Endothelial cell of umbilical vein (primary cell): ENCODE measurements at regions of chr6 and their contacts with region 1.

Region 1: DNA sequence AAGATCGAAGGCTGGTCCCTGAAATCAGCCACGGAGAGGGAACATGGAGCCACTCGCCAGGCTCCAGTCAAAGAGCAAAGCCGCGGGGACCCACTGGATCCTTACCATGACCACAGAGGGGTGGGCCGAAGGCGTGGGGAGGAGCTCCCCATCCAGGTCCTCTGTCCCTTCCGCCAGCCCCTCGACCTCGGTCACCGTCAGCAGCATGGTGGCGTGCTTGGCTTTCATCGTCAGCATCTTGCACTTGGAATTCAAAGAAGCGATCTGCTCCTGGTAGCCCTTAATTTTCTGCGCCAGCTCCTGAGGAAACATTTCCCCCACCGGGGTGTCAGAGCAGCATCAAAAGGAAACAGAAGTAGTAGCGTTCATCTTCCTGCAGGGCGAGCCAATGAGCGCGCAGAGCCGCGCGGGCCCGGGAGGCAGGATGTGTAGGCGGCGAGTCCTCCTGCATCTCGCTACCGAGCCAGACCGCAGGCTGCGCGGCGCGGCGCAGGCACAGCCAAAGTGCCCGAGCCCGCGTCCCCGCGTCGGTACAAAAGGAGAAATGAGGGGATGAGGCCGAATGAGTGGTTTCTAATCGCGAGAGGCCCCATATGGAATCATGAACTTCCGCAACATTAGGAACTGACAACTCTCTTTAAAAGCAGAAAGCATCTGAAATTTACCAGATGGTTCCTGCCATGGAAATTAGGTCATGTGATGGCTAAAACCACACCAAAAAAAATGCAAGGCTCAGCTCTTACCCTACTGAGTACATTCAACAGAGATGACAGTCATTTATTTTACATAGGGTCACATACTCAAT is 335.2 kb downstream of the SYNE1 start:
- DNase-seq: peak; percentile 93
- H3K4me3 ChIP-seq: peak overlapping the region; percentile 76 to 97 (median 93)
- H3K27ac ChIP-seq: peak overlapping the region; percentile 84
- H3K4me1 ChIP-seq: peaks cover 22% of the 10 kb centered on the region
- H3K27me3 ChIP-seq: no peaks in the 10 kb centered on the region
- CTCF ChIP-seq: peak; percentile 57 to 70
- POLR2A ChIP-seq: peak; percentile 86

Region 2: DNA sequence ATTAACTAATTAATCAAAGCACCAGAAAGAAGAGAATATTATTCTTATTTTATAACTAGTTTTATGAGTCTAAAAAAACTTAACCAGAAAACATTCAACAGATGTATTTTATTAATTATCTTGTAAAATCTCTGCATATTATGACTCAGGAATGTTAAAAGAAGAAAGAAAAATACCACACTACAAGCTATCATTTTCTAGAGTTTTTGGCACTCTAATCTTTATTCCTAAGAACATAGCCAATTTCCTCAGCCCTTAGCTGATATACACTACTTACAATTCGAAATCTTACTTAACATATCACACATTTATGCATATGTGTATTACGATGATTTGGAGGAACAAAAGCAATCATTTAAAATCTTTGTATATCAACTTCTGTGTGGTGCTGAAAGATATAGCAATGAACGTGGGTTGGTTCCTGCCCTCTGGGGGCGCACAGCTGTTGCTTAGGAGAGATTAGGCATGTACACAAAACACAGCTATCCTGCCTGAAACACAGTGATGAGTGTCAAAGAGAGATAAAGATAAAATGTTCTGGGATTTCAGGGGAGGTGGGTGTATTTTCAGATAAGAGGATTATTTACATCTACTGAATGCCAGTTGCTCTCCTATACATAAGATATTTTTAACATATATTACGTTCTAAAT is 69.3 kb before region 1 on chr6:
- CTCF ChIA-PET with region 1: no interaction called
- POLR2A ChIA-PET with region 1: no interaction called
- dilution Hi-C with region 1: no loop called
- intact Hi-C with region 1: loop called (anchors 2 kb)
- DNase-seq: peak; percentile 89
- H3K4me3 ChIP-seq: no peak overlapping the region
- H3K27ac ChIP-seq: no peak overlapping the region
- H3K4me1 ChIP-seq: peaks cover 4% of the 10 kb centered on the region
- H3K27me3 ChIP-seq: no peaks in the 10 kb centered on the region
- CTCF ChIP-seq: peak; percentile 11 to 20
- POLR2A ChIP-seq: no peak

Region 3: DNA sequence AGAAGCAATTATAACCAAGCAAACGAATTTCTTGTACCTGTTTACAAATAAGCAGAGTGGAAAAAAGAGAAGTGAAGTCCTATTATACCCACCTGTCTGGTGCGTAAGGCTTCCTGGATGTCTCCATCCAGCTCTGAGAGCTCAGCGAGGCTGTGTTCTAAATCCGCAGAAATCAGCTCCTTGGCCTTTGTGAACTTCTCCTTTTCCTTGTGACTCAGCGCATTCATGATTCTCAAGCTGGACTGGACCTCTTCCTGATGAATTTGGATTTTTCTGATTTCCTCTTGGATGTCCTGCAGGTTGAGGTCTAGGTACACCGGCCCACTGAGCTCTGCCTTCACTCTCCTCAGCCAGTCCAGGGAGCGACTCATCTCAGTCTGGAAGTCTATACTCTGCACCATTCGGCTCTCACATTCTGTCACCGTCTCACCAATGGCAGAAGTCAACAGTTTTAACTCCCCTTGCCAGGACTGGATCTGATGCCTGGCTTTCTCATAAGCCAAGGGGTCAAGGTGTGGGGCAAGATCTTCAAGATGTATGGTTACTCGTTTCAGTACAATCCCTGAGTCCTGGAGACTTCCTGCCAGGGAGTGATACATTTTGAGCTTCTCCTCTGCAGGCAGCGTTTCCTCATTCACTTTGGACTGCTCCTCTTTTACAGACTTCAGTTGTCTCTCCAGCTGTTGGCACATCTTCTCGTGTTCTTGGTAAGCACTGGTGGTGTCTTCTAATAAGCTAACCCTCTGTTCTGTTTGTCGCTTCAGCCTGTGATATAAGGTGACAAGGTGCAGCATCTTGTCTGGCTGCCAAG is 27.9 kb after region 1 on chr6:
- CTCF ChIA-PET with region 1: interaction called, 14 read pairs
- POLR2A ChIA-PET with region 1: no interaction called
- dilution Hi-C with region 1: no loop called
- intact Hi-C with region 1: no loop called
- DNase-seq: no peak
- H3K4me3 ChIP-seq: no peak overlapping the region
- H3K27ac ChIP-seq: no peak overlapping the region
- H3K4me1 ChIP-seq: no peaks in the 10 kb centered on the region
- H3K27me3 ChIP-seq: no peaks in the 10 kb centered on the region
- CTCF ChIP-seq: no peak
- POLR2A ChIP-seq: no peak

Region 4: GRCh38 chr6:152356451-152357061 is 54.6 kb after region 1 on chr6:
- CTCF ChIA-PET with region 1: interaction called, 23 read pairs
- POLR2A ChIA-PET with region 1: no interaction called
- dilution Hi-C with region 1: no loop called
- intact Hi-C with region 1: no loop called
- DNase-seq: peak; percentile 54
- H3K4me3 ChIP-seq: no peak overlapping the region
- H3K27ac ChIP-seq: no peak overlapping the region
- H3K4me1 ChIP-seq: no peaks in the 10 kb centered on the region
- H3K27me3 ChIP-seq: no peaks in the 10 kb centered on the region
- CTCF ChIP-seq: peak in 1 of 2 donors; percentile 29
- POLR2A ChIP-seq: no peak

Region 5: GRCh38 chr6:152484806-152485205 is 182.8 kb after region 1 on chr6:
- CTCF ChIA-PET with region 1: interaction called, 3 read pairs
- POLR2A ChIA-PET with region 1: no interaction called
- dilution Hi-C with region 1: no loop called
- intact Hi-C with region 1: loop called (anchors 1 kb)
- DNase-seq: peak; percentile 92
- H3K4me3 ChIP-seq: no peak overlapping the region
- H3K27ac ChIP-seq: no peak overlapping the region
- H3K4me1 ChIP-seq: peaks cover 14% of the 10 kb centered on the region
- H3K27me3 ChIP-seq: no peaks in the 10 kb centered on the region
- CTCF ChIP-seq: no peak
- POLR2A ChIP-seq: no peak

Region 6: DNA sequence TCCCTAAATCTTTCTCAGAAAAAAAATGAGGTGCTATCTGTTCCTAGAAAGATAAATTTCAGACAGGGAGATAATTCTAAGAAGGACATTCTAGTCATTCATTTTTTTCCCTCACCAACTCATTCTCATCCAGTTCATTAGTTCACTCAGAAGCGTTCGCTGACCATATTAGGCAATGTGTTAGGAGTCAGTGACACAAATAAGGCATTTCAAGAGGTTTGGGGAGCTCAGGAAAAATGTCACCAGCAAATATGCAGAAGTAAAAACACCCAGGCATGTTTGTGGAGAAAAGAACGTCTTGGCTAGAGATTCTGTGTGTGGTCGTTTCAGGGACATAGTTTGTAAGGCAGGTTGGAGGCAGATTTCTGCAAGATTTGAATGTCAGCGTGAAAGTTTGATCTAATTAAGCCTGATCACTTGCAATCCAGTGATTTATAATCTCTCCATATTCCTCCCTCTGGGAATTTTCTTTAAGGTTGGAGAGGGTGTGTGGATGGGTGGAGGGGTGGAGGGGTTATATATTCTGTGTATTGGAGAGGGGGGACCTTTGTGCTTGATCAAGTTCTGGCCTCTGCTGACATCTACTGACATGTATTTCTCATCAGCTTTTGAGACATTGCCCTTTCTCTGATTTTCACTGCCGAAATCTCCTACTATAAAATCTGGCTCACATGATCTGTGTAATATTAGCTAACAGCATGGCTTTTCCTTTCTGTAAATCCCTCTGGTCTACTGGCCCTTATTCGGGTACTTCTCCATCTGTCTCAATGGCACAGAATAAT is 399.3 kb after region 1 on chr6:
- CTCF ChIA-PET with region 1: interaction called, 6 read pairs
- POLR2A ChIA-PET with region 1: no interaction called
- dilution Hi-C with region 1: no loop called
- intact Hi-C with region 1: loop called (anchors 5 kb)
- DNase-seq: peak; percentile 59
- H3K4me3 ChIP-seq: peak overlapping the region; percentile 57 to 97 (median 88)
- H3K27ac ChIP-seq: peak overlapping the region; percentile 92
- H3K4me1 ChIP-seq: peaks cover 42% of the 10 kb centered on the region
- H3K27me3 ChIP-seq: no peaks in the 10 kb centered on the region
- CTCF ChIP-seq: peak in 1 of 2 donors; percentile 3
- POLR2A ChIP-seq: no peak

Region 7: DNA sequence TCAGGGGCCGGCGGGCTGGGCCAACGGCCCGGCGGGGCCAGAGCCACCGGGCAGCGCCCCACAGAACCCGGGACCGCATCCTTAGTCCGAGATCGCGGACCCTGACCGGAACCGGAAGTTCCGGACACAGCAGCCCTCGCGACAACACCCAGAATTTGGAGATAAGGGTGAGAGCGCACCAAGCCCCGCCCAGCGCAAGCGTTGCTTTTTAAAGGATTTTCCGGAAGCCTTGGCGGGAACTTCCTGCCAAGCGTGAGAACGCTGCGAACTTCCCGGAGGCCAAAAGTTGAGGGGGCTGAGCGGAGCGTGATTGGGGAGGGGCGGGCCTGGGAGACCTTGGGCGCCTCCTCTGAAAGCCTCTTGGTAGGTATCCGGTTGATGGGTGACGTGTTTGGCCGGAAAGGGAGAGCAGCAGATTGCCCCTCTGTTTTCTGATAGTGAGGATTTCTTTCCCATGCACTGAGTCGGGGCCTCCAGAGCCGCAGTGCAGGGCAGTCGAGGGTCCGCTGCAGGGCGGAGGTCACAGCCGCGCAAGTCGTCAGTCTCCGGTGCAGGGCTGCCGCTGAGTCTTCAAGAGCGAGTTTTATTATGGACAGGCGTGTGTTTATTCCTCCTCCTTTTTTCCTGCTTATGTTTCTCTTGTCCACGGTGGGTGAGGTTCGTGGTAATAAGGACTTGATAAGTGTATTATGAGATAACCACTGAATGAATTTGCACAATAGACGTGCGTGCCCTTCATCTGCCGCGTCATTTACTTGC is 700.8 kb after region 1 on chr6 and contains the start of gene MTRF1L:
- CTCF ChIA-PET with region 1: interaction called, 3 read pairs
- POLR2A ChIA-PET with region 1: no interaction called
- dilution Hi-C with region 1: no loop called
- intact Hi-C with region 1: loop called (anchors 10 kb)
- DNase-seq: peak; percentile 97
- H3K4me3 ChIP-seq: peak within 1 kb of the TSS; percentile 72 to 96 (median 90)
- H3K27ac ChIP-seq: peak within 1 kb of the TSS; percentile 77
- H3K4me1 ChIP-seq: peaks cover 22% of the 10 kb centered on the region
- H3K27me3 ChIP-seq: no peaks in the 10 kb centered on the region
- CTCF ChIP-seq: no peak
- POLR2A ChIP-seq: peak; percentile 92
- total RNA-seq, gene MTRF1L: 27.5 and 31.2 TPM in 2 replicates